ENCODE measurements at regions of chr2 and their contacts with region 1.

Region 1: GRCh38 chr2:100984892-100985379 is 17.2 kb upstream of the RPL31 start:
- DNase-seq: peak; percentile 77
- H3K4me3 Mint-ChIP-seq: peak overlapping the region; percentile 6
- H3K27ac Mint-ChIP-seq: no peak overlapping the region
- H3K4me1 Mint-ChIP-seq: peaks cover 8% of the 10 kb centered on the region
- H3K27me3 Mint-ChIP-seq: no peaks in the 10 kb centered on the region
- CTCF ChIP-seq: peak; percentile 91

Region 2: DNA sequence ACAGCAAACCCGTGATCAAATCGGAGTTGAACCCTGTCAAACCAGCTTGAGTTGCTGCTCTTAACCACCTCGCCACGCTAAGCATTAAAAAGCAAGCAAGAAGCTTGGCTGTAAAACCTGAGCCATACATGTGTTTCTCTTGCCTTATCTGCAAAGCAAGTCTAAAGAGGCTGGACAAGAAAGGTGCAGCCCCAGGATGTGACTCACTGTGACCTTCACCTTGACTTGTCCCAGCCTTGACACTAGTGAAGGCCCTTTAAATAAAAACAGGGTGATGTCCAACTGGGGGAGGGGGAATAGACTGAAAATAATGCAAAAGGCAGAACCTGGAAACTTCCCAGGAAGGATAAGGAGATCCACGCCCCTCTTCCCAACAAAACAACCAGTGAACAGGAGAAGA is 292.6 kb before region 1 on chr2:
- CTCF ChIA-PET with region 1: no interaction called
- intact Hi-C with region 1: no loop called
- DNase-seq: no peak
- H3K4me3 Mint-ChIP-seq: no peak overlapping the region
- H3K27ac Mint-ChIP-seq: no peak overlapping the region
- H3K4me1 Mint-ChIP-seq: peaks cover 23% of the 10 kb centered on the region
- H3K27me3 Mint-ChIP-seq: no peaks in the 10 kb centered on the region
- CTCF ChIP-seq: no peak

Region 3: DNA sequence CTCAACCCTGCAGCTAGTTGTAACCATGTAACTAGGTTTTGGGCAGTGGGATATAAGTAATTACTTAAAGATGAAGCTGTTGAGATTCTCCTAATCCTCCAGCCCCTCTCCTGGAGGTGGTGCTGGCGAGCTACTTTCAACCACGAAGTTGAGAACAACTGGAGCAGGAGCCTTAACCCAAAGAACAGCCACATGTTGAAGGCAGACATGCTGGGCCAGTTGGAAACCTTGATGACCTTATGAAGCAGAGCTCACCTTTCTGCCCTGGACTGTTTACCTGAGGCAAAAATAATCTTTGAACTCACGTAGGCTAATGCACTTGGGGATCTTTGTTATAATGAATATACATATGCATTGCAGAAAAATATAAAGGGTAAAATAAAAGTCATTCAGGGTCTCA is 254.6 kb before region 1 on chr2:
- CTCF ChIA-PET with region 1: no interaction called
- intact Hi-C with region 1: loop called (anchors 1 kb)
- DNase-seq: peak; percentile 76
- H3K4me3 Mint-ChIP-seq: no peak overlapping the region
- H3K27ac Mint-ChIP-seq: no peak overlapping the region
- H3K4me1 Mint-ChIP-seq: peaks cover 34% of the 10 kb centered on the region
- H3K27me3 Mint-ChIP-seq: no peaks in the 10 kb centered on the region
- CTCF ChIP-seq: peak; percentile 68

Measured in Calu3 (cell line).